AG04450 (cell line): ENCODE measurements at regions of chr3 and their contacts with region 1.

Region 1: GRCh38 chr3:100796556-100796955 is 87.3 kb downstream of the TFG start:
- DNase-seq: no peak
- H3K4me3 ChIP-seq: no peak overlapping the region
- H3K27ac ChIP-seq: no peak overlapping the region
- H3K27me3 ChIP-seq: no peaks in the 10 kb centered on the region
- CTCF ChIP-seq: peak; percentile 50

Region 2: DNA sequence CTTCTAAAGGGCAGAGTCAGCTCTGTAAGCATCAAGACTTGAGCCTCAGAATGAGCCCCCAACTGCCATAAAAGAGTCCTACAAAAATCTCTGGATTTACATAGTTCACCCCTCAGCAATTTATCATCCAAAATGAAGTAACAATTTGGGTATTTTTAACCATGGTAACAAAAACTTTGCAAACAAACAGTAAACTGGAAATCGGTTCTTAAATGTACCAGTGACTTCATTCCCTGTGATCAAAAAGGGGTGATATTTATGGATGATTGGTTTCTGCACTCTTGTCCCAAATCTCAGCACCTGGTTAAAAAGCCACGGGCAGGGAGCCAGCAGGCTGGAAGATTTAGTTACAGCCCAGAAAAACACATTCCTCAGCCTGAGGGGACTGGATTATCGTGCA is 13.7 kb before region 1 on chr3:
- CTCF ChIA-PET with region 1: interaction called, 17 read pairs
- POLR2A ChIA-PET with region 1: no interaction called
- DNase-seq: no peak
- H3K4me3 ChIP-seq: no peak overlapping the region
- H3K27ac ChIP-seq: no peak overlapping the region
- H3K27me3 ChIP-seq: no peaks in the 10 kb centered on the region
- CTCF ChIP-seq: no peak

Region 3: DNA sequence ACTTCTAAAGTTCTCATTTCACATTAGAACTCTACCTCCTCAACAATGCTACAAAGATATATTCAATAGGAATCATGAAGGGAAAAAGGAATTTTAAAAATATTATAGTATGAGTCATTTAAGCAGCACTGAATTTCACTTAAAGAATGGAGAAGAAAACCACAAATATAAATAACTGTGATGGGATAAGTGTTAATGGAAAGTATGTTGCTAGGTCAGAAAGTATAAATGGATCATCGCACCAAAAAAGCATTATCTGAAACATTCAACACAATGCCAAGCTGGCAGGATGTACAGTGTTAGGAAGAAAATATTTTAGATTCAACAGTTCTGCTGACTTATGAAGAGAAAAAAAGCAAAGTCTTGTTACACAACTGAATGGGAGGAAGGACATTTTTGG is 14.1 kb after region 1 on chr3:
- CTCF ChIA-PET with region 1: interaction called, 11 read pairs
- POLR2A ChIA-PET with region 1: no interaction called
- DNase-seq: peak; percentile 41
- H3K4me3 ChIP-seq: no peak overlapping the region
- H3K27ac ChIP-seq: no peak overlapping the region
- H3K27me3 ChIP-seq: no peaks in the 10 kb centered on the region
- CTCF ChIP-seq: no peak